ENCODE measurements at regions of chr1 and their contacts with region 1.

Region 1: DNA sequence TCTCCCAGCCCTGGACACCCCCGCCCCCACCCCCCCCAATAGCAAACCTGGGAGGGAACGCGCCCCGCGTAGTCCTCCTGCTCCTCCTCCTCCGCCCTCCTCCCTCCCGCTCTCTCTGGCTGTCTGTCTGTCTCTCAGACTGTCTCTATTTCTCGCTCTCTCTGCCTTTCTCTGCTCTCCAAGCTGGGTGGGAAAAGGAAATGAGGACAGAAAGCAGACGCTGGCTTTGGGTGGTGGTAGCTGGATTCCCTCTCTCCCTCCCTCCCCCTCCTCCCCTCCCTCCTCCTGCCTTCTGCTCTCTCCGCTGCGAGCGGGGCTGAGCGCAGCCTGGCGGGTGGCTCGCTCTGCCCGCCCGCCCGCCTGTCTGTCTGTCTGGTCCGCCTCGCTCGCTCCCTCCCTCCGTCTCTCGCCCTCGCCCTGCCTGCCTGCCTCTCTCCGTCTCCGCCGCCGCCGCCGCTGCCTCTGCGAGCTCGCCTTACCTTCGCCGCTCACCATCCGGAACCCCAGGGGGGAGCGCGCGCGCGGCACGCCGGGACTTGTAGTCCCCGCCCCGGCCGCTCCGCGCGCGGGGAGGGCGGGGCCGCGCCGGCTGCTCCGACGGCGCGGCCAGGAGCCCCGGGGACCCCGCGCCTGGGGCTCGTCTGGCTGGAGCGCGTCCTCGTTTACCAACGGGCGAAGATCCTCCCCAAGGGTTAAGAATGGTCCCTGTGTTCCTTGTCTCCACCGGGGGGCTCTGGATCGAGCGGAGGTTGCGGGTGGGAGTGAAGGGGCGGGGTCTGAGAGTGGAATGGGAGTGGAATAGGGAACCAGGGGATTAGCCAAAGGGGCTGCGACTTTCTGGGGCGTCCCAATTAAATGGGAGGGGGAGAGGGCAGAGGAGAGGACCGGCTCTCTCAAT is at the start of gene AHDC1:
- DNase-seq: peak; percentile 89 to 92
- ATAC-seq: peak; percentile 58 to 61
- H3K4me3 ChIP-seq: peak within 1 kb of the TSS; percentile 86 to 99 (median 91)
- H3K27ac ChIP-seq: peak within 1 kb of the TSS; percentile 97 to 100 (median 100)
- H3K4me1 ChIP-seq: peaks cover 34 to 35% of the 10 kb centered on the region in 2 donors
- H3K27me3 ChIP-seq: no peaks in the 10 kb centered on the region
- CTCF ChIP-seq: peak in 2 of 5 experiments; percentile 41 to 70
- POLR2A ChIP-seq: peak; percentile 97
- total RNA-seq, gene AHDC1: 22.2 to 57.9 (median 35.2) TPM

Region 2: DNA sequence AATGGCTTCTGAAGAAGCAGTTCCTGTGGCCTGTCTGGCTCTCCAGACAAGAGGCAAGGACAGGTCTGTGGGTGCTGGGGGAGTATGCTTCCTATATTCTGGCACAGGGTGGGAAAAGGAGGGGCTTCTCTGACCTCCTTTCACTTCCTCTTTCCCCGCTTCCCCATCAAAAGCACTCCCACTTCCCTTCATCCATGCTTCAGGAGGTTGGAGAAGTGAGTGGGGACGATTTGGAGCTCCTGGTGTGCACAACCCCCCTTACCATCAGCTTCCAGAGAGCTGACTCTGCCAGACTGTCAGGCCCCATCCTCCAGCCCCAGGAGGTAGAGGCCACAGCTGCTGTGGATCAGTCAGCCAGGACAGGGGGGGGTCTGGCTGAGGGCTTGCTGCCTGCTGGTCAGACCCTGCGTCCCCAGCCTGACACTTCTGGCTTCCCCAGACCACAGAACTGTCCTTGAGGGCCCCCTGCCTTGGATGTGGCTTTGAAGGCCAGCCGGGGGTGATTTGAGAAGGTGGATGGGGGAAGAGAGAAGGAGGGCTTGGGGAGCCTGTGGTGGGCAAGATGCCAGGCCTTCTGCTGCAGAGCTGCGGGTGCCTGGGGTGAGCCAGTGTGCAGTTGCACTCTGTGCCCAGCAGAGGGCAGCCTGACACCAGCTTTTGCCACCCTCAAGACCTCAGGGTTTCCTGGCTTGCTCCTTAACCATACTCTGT is 303.4 kb before region 1 on chr1:
- in situ Hi-C with region 1: no loop called
- intact Hi-C with region 1: loop called (anchors 5 kb)
- DNase-seq: peak; percentile 67 to 79
- ATAC-seq: peak; percentile 84 to 92
- H3K4me3 ChIP-seq: no peak overlapping the region
- H3K27ac ChIP-seq: peak overlapping the region in 3 of 4 donors; percentile 41 to 65 (median 65)
- H3K4me1 ChIP-seq: peaks cover 27 to 37% of the 10 kb centered on the region in 2 donors
- H3K27me3 ChIP-seq: no peaks in the 10 kb centered on the region
- CTCF ChIP-seq: peak; percentile 96 to 99 (median 98)
- POLR2A ChIP-seq: no peak

Region 3: DNA sequence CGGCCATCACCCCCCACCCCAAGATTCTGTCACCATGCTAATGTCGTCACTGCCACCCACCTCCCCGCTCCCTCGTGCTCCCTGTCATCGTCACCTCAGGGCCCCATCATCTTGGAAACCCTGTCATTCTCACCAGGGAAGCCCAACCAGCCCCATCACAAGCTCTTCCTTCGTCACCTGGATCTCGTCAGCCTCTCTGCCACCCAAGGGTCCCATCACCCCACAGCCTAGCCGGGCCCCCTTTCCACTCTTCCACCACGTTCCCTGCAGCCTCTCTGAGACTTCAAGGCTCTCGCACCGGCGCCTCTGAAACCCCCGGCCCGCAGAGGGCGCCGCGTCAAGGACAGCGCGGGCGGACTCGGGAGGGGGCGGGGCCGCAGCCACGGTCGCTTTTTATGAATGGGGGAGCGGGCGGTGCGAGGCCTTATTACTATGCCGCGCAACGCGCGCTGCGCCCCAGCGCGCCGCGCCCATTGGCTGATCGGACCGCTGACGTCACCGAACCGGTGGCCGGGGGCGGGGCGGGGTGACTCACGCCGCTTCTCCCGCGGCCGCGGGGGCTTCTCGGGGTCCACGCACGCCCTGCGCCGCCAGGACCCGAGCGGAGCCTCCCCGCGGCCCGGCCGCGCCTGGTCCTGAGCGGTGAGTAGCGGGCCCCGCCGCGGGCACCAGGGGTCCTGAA is 211.7 kb before region 1 on chr1 and contains the start of gene GPR3:
- in situ Hi-C with region 1: loop called in 3 of 4 experiments (anchors 5 to 10 kb)
- intact Hi-C with region 1: loop called (anchors 2 kb)
- DNase-seq: peak; percentile 77 to 84
- ATAC-seq: peak; percentile 70
- H3K4me3 ChIP-seq: peak within 1 kb of the TSS; percentile 50 to 65 (median 54)
- H3K27ac ChIP-seq: peak within 1 kb of the TSS; percentile 44 to 67 (median 62)
- H3K4me1 ChIP-seq: peaks cover 17 to 19% of the 10 kb centered on the region in 2 donors
- H3K27me3 ChIP-seq: no peaks in the 10 kb centered on the region
- CTCF ChIP-seq: peak; percentile 32 to 65 (median 62)
- POLR2A ChIP-seq: peak; percentile 27 to 53
- total RNA-seq, gene GPR3: 0.23 to 0.51 (median 0.35) TPM in 3 of 4 donors, not detected in the other

Region 4: DNA sequence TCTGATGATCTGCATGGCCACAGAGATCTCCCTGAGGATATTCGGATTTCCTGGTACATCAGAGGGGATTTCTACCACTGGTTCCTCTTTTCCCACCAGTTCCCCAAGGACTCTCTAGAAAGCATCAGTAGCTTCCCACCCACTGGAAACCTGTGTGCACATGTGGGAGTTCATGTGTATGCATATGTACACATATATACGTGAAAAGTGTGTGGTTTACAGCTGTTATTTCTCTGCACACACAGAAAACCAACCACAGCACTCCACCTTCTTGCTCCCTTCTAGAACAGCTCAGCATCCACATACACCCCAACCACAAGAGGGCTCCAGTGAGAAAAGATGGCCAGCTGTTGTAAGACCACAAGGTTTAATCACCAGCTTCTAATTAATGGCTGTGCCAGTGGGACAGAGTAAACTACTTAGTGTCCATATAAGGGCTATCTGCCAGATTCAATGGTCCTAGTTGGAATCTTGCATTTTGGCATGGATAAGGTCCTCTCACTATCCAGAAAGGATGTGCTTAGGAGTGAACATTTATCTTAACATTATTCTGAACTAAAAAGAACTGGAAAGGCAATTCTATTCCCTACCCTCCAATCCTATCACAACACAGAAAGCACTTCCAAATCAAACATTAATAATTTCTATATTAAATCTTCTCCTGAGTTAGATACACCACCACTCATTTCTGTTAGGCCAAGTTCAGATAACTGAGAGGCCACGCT is 187.4 kb before region 1 on chr1:
- in situ Hi-C with region 1: no loop called
- intact Hi-C with region 1: loop called (anchors 5 kb)
- DNase-seq: no peak
- ATAC-seq: peak; percentile 41 to 47
- H3K4me3 ChIP-seq: no peak overlapping the region
- H3K27ac ChIP-seq: peak overlapping the region in 3 of 4 donors; percentile 77 to 86 (median 81)
- H3K4me1 ChIP-seq: peaks cover 33 to 47% of the 10 kb centered on the region in 2 donors
- H3K27me3 ChIP-seq: no peaks in the 10 kb centered on the region
- CTCF ChIP-seq: peak; percentile 38 to 71 (median 70)
- POLR2A ChIP-seq: no peak

Region 5: GRCh38 chr1:27525296-27526272 is 78.3 kb before region 1 on chr1:
- in situ Hi-C with region 1: no loop called
- intact Hi-C with region 1: loop called (anchors 1 kb)
- DNase-seq: peak; percentile 47 to 69
- ATAC-seq: peak in 1 of 2 donors; percentile 7
- H3K4me3 ChIP-seq: peak overlapping the region; percentile 4 to 34 (median 24)
- H3K27ac ChIP-seq: peak overlapping the region; percentile 86 to 95 (median 90)
- H3K4me1 ChIP-seq: peaks cover 82 to 89% of the 10 kb centered on the region in 2 donors
- H3K27me3 ChIP-seq: no peaks in the 10 kb centered on the region
- CTCF ChIP-seq: no peak
- POLR2A ChIP-seq: peak in 1 of 2 donors; percentile 9

Region 6: GRCh38 chr1:27568300-27569087 is 35.4 kb before region 1 on chr1:
- in situ Hi-C with region 1: no loop called
- intact Hi-C with region 1: loop called (anchors 2 kb)
- DNase-seq: peak; percentile 95 to 98
- ATAC-seq: peak; percentile 30 to 42
- H3K4me3 ChIP-seq: peak overlapping the region; percentile 30 to 52 (median 38)
- H3K27ac ChIP-seq: peak overlapping the region; percentile 95 to 100 (median 98)
- H3K4me1 ChIP-seq: peaks cover 95 to 96% of the 10 kb centered on the region in 2 donors
- H3K27me3 ChIP-seq: no peaks in the 10 kb centered on the region
- CTCF ChIP-seq: peak; percentile 68 to 92 (median 89)
- POLR2A ChIP-seq: peak; percentile 77 to 82

Region 7: GRCh38 chr1:27671964-27672749 is 68.2 kb after region 1 on chr1 and contains the start of gene IFI6:
- in situ Hi-C with region 1: loop called in 1 of 4 experiments (anchors 5 kb)
- intact Hi-C with region 1: no loop called
- DNase-seq: peak; percentile 68 to 80
- ATAC-seq: peak; percentile 96 to 98
- H3K4me3 ChIP-seq: peak within 1 kb of the TSS; percentile 52 to 72 (median 65)
- H3K27ac ChIP-seq: peak within 1 kb of the TSS; percentile 72 to 83 (median 80)
- H3K4me1 ChIP-seq: peaks cover 16 to 27% of the 10 kb centered on the region in 2 donors
- H3K27me3 ChIP-seq: no peaks in the 10 kb centered on the region
- CTCF ChIP-seq: peak in 4 of 5 experiments; percentile 21 to 52 (median 36)
- POLR2A ChIP-seq: peak; percentile 33 to 73
- total RNA-seq, gene IFI6: 7.7 to 25.1 (median 14.5) TPM

Measured in gastrocnemius medialis (tissue), 4 donors.